ENCODE measurements at regions of chr13 and their contacts with region 1.

Region 1: GRCh38 chr13:86692291-86692690 is 893.1 kb upstream of the SLITRK6 start:
- DNase-seq: no peak
- H3K4me3 ChIP-seq: no peak overlapping the region
- H3K27ac ChIP-seq: no peak overlapping the region
- H3K4me1 ChIP-seq: no peaks in the 10 kb centered on the region
- H3K27me3 ChIP-seq: no peaks in the 10 kb centered on the region
- CTCF ChIP-seq: no peak

Region 2: GRCh38 chr13:86201477-86201876 is 490.8 kb before region 1 on chr13:
- CTCF ChIA-PET with region 1: no interaction called
- POLR2A ChIA-PET with region 1: no interaction called
- intact Hi-C with region 1: no loop called
- DNase-seq: no peak
- H3K4me3 ChIP-seq: no peak overlapping the region
- H3K27ac ChIP-seq: no peak overlapping the region
- H3K4me1 ChIP-seq: no peaks in the 10 kb centered on the region
- H3K27me3 ChIP-seq: no peaks in the 10 kb centered on the region
- CTCF ChIP-seq: no peak

Region 3: DNA sequence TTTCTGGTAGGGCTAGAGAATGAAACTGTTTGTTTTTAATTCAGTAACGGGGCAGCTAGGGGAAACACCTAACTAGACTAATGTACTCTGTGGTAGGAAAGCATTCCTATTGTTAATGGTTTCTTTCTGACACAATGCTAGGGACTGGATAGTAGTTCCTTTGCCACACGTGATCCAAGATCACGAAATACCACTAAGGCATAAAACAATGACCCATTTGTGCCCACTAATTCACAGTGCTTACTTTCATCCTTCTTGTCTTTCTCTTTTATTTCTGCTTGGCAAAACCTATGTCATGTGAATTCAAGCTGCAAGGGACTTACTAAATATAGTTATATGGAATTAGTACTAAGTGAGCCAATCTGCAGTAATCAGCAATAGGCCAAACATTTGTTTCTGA is 58.9 kb before region 1 on chr13:
- CTCF ChIA-PET with region 1: no interaction called
- POLR2A ChIA-PET with region 1: no interaction called
- intact Hi-C with region 1: no loop called
- DNase-seq: no peak
- H3K4me3 ChIP-seq: no peak overlapping the region
- H3K27ac ChIP-seq: no peak overlapping the region
- H3K4me1 ChIP-seq: no peaks in the 10 kb centered on the region
- H3K27me3 ChIP-seq: no peaks in the 10 kb centered on the region
- CTCF ChIP-seq: no peak

Region 4: DNA sequence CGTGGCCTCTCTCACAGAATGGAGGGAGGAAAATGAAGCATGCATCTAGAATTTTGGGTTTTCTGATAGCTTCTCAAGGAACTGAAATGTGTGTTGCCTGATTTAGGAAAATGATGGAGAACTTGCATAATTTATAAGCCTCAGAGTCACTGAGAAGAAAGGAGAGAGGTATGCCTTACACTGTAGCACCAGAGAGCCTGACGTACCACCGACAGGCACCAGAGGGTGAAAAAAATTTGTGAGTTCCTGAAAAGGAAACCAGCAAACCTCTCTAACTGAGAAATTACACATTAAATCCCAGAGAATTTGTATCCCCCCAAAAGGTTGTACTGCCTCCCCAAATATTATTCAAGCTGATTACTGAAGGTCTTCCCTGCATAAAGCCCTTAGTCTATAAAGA is 22.2 kb after region 1 on chr13:
- CTCF ChIA-PET with region 1: no interaction called
- POLR2A ChIA-PET with region 1: interaction called, 12 read pairs
- intact Hi-C with region 1: no loop called
- DNase-seq: no peak
- H3K4me3 ChIP-seq: no peak overlapping the region
- H3K27ac ChIP-seq: no peak overlapping the region
- H3K4me1 ChIP-seq: no peaks in the 10 kb centered on the region
- H3K27me3 ChIP-seq: no peaks in the 10 kb centered on the region
- CTCF ChIP-seq: no peak